ENCODE measurements at regions of chr2 and their contacts with region 1.

Region 1: GRCh38 chr2:199596549-199596948 is 138.8 kb upstream of the SATB2 start:
- DNase-seq: peak; percentile 41
- ATAC-seq: peak; percentile 82
- H3K4me3 ChIP-seq: no peak overlapping the region
- H3K27ac ChIP-seq: no peak overlapping the region
- H3K4me1 ChIP-seq: 0 out of 2 replicates have a peak, but pooled peaks cover 6% of the 10 kb centered on the region
- H3K27me3 ChIP-seq: no peaks in the 10 kb centered on the region; a peak in 1 of 5 replicates
- CTCF ChIP-seq: peak; percentile 47
- EP300 ChIP-seq: no peak
- POLR2A ChIP-seq: no peak
- RAD21 ChIP-seq: no peak

Region 2: GRCh38 chr2:198309673-198310280 is 1286.8 kb before region 1 on chr2:
- CTCF ChIA-PET with region 1: no interaction called
- POLR2A ChIA-PET with region 1: no interaction called
- in situ Hi-C with region 1: no loop called
- intact Hi-C with region 1: loop called (anchors 2 kb)
- DNase-seq: peak; percentile 42
- ATAC-seq: peak; percentile 49; the same call in 2 of the 3 replicates
- H3K4me3 ChIP-seq: no peak overlapping the region
- H3K27ac ChIP-seq: no peak overlapping the region
- H3K4me1 ChIP-seq: peaks cover 16% of the 10 kb centered on the region
- H3K27me3 ChIP-seq: peaks cover 2 to 11% of the 10 kb centered on the region in 2 experiments; a peak in 1 of 5 replicates
- CTCF ChIP-seq: peak; percentile 76
- EP300 ChIP-seq: no peak
- POLR2A ChIP-seq: no peak
- RAD21 ChIP-seq: no peak; the same call in 1 of the 2 replicates

Region 3: DNA sequence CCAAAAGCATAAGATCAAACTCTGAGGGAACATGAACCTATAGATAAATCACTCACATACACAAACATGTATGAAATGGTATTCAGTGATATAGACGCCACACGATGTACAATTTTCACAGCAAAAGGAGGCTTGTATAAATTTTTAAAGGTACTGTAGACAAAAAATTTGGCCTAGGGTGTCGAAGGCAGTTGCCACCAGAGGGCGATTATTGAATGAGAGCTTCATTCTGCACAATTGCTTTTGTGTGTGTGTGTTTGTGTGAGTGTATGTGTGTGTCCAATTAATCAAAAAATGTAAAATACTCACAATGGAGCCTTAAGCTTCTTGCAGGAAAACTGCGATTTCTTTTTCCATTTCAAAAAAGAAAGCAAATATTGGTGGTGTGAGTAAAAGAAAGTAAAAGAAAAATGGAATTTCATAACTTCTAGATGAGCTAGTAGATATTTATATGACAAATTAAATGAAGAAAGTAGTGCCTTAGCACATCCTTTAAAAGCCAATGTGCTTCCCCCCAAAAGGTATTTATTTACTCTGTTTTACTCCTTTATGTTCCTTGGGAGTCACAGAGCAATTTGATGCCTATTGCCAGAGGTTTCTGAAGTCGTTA is 938.9 kb before region 1 on chr2:
- CTCF ChIA-PET with region 1: no interaction called
- POLR2A ChIA-PET with region 1: no interaction called
- in situ Hi-C with region 1: no loop called
- intact Hi-C with region 1: loop called (anchors 2 kb)
- DNase-seq: peak; percentile 7
- ATAC-seq: peak; percentile 28; the same call in 1 of the 3 replicates
- H3K4me3 ChIP-seq: no peak overlapping the region
- H3K27ac ChIP-seq: no peak overlapping the region
- H3K4me1 ChIP-seq: no peaks in the 10 kb centered on the region
- H3K27me3 ChIP-seq: no peaks in the 10 kb centered on the region
- CTCF ChIP-seq: peak; percentile 49
- EP300 ChIP-seq: no peak
- POLR2A ChIP-seq: no peak
- RAD21 ChIP-seq: no peak

Region 4: DNA sequence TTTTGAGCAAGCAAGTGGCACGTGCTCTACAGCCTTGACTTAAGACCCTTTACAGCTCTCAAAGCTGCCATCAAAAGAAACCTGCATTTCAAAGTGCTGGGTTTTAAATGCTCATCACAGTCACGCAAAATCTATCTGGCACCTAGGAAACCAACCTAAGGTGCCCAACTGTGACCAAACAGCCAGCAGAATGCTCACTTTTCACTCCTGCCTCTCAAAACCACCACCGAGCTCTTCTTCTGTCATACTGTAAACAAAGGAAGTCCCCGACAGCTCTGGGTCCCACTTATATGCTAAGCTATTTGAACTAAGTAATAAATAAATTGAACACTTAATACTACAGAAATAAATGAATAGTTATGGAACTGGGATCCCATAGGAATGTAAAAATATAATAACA is 172.4 kb before region 1 on chr2:
- CTCF ChIA-PET with region 1: no interaction called
- POLR2A ChIA-PET with region 1: no interaction called
- in situ Hi-C with region 1: no loop called
- intact Hi-C with region 1: no loop called
- DNase-seq: no peak
- ATAC-seq: no peak
- H3K4me3 ChIP-seq: no peak overlapping the region
- H3K27ac ChIP-seq: no peak overlapping the region
- H3K4me1 ChIP-seq: no peaks in the 10 kb centered on the region
- H3K27me3 ChIP-seq: no peaks in the 10 kb centered on the region
- CTCF ChIP-seq: no peak
- EP300 ChIP-seq: no peak
- POLR2A ChIP-seq: no peak
- RAD21 ChIP-seq: no peak

Region 5: DNA sequence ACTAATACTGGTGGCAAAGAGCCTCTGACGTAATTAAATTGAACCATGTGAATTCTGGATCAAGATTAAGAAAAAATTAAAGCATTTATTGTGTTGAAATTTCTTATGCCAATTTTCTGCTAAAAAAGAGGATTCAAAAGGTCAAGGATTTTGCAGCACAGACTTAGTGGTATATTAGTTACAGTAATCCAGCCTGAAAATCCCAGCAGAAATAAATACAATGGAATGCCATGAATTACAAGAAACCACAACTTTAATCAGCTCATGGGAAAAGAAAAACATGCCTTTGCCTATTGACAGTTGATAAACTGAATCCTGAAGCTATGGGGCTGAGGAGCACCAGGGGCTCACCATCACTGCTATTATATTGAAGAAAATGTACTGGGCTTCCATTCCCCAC is 24.0 kb before region 1 on chr2:
- CTCF ChIA-PET with region 1: no interaction called
- POLR2A ChIA-PET with region 1: no interaction called
- in situ Hi-C with region 1: no loop called
- intact Hi-C with region 1: no loop called
- DNase-seq: no peak
- ATAC-seq: no peak
- H3K4me3 ChIP-seq: no peak overlapping the region
- H3K27ac ChIP-seq: no peak overlapping the region
- H3K4me1 ChIP-seq: no peaks in the 10 kb centered on the region
- H3K27me3 ChIP-seq: no peaks in the 10 kb centered on the region; a peak in 1 of 5 replicates
- CTCF ChIP-seq: no peak
- EP300 ChIP-seq: no peak
- POLR2A ChIP-seq: no peak
- RAD21 ChIP-seq: no peak

Measured in HepG2 (cell line).